ENCODE measurements at regions of chr17 and their contacts with region 1.

Region 1: GRCh38 chr17:27332485-27333409 is 38.8 kb downstream of the WSB1 start:
- DNase-seq: peak; percentile 84
- H3K4me3 Mint-ChIP-seq: peak overlapping the region; percentile 85
- H3K27ac Mint-ChIP-seq: peak overlapping the region; percentile 99
- H3K4me1 Mint-ChIP-seq: peaks cover 23% of the 10 kb centered on the region
- H3K27me3 Mint-ChIP-seq: no peaks in the 10 kb centered on the region

Region 2: DNA sequence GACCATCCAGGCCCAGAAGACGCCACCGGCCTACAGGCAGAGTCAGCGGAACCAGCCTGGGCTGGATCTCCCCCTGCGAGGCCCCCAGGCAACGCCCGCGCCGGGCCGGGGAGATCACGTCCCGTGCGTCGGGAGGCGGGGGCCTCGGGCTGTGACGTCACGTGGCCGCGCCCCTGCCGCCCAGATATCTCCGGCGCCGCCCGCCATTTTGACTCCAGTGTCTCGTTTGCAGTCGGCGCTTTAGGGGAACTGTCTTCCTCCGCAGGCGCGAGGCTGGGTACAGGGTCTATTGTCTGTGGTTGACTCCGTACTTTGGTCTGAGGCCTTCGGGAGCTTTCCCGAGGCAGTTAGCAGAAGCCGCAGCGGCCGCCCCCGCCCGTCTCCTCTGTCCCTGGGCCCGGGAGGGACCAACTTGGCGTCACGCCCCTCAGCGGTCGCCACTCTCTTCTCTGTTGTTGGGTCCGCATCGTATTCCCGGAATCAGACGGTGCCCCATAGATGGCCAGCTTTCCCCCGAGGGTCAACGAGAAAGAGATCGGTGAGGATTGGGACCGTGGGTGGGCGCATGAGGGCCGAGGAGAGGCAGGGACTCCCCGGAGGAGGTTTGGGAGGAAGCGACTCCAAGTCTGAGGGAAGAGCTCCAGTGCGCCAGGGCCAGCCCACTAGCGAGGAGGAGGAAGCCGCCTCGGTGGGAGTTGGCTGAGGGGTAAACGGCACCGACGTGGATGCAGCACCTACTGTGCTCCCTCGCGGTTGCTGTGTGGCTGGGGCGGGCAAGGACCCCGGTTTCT is 38.7 kb before region 1 on chr17 and contains the start of gene WSB1:
- intact Hi-C with region 1: loop called (anchors 1 kb)
- DNase-seq: peak; percentile 89
- H3K4me3 Mint-ChIP-seq: peak within 1 kb of the TSS; percentile 97
- H3K27ac Mint-ChIP-seq: peak within 1 kb of the TSS; percentile 99
- H3K4me1 Mint-ChIP-seq: peaks cover 29% of the 10 kb centered on the region
- H3K27me3 Mint-ChIP-seq: no peaks in the 10 kb centered on the region
- total RNA-seq, gene WSB1: 165 and 170 TPM in 2 replicates

Region 3: GRCh38 chr17:27353461-27354050 is 20.8 kb after region 1 on chr17:
- intact Hi-C with region 1: loop called (anchors 2 kb)
- DNase-seq: peak; percentile 84
- H3K4me3 Mint-ChIP-seq: peak overlapping the region; percentile 78
- H3K27ac Mint-ChIP-seq: peak overlapping the region; percentile 96
- H3K4me1 Mint-ChIP-seq: peaks cover 26% of the 10 kb centered on the region
- H3K27me3 Mint-ChIP-seq: no peaks in the 10 kb centered on the region

Measured in activated T-helper 2 cell treated with anti-CD3 and anti-CD28 coated beads, Interferon-gamma antibody, Interleukin-2, Interleukin-4, amounts not matched to agents 10 μg/mL and 5 μg/mL and 100 μg/mL, durations not matched to agents 14 hours and 24 hours and 36 hours (primary cell).